ENCODE measurements at regions of chr20 and their contacts with region 1.

Region 1: DNA sequence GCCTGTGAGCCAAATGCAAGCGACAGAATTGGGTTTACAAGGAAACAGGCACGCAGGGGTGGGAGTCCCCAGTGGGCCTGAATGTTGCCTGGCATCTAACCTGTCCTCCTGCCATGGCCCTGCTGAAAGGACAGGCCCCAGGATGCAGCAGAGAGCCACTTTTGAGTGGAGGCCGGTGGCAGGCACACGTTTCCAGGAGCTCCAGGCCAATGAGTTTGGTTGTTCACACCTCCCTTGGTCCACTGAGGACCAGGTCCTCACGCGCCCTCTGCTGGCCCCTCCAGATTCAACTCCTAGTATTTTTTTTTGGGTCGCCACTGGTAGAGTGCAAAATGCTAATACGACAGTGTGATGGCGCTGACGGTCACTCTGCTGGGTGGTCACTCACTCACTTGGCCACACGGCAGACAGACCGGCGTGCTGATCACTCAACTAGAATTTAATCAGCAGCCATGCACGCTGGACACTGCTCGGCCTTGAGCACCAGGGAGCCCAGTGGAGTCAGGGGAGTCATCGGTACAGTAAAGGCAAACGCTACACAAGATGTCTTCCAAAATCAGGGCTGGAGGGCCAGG is 81.7 kb upstream of the NFATC2 start:
- DNase-seq: peak; percentile 70
- ATAC-seq: peak; percentile 67
- H3K4me3 Mint-ChIP-seq: no peak overlapping the region
- H3K27ac Mint-ChIP-seq: no peak overlapping the region
- H3K4me1 Mint-ChIP-seq: peaks cover 5% of the 10 kb centered on the region
- H3K27me3 Mint-ChIP-seq: no peaks in the 10 kb centered on the region

Region 2: DNA sequence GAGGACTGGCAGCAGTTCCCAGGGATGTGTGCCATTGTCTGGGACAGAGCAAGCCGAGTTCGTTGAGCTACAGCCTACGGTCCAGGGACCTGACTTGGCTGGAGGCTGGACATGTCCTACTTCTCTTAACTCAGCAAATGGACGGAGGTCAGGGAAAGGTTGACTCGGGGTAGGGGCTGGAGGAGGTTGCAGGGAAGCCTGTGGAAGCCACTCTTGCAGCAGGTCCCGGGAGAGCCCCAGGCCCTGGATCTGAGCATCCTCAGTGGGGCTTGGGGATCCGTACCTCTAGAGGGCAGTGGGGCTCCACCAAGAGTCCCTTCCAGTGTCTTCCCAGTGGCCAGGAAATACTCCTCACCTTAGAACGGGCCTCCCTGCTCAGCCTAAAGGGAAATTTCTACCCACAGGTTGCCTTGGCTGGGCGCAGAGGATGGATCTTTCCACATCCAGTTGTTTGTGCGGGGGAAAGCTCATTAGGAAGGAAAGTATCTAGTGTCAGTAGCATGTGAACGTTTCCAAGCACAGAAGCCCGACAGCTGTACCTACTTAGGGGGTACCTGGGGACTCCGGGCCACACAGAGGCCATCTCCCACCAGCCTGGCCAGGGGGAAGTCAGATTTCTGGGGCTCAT is 252.0 kb before region 1 on chr20:
- CTCF ChIA-PET with region 1: interaction called, 13 read pairs
- POLR2A ChIA-PET with region 1: no interaction called
- DNase-seq: peak; percentile 67
- ATAC-seq: peak; percentile 79
- H3K4me3 Mint-ChIP-seq: no peak overlapping the region
- H3K27ac Mint-ChIP-seq: no peak overlapping the region
- H3K4me1 Mint-ChIP-seq: peaks cover 29% of the 10 kb centered on the region
- H3K27me3 Mint-ChIP-seq: no peaks in the 10 kb centered on the region

Region 3: DNA sequence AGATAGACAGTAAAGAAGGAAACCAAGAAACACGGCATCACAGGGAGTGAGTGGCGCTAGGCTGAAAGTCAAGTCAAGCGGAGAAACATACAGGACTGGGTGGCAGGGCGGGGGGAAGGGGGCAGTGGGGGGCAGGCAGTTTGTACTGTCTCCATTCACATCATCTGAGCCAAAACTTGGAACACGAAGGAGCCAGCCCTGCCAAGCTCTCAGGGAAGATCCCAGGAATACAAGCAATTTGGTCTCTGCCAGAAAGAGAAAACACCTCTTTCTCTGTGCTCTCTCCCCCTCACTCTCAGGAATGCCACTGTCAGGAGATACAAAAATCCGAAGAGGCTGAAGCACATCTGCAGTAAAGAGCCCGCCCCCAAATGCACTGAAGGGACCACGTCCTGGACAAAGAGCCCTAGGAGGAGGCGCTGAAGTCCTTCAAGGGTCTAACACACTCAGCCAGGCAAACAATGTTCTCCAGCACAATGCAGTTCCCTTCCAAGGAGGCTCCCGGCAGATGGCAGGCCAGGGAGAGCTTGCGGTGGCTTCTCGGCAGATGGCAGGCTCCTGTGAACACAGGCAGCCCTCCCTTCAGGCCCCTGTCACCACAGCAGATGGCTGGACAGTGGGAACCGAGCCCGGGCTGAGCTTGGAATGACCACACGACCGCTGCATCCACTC is 53.9 kb after region 1 on chr20:
- CTCF ChIA-PET with region 1: no interaction called
- POLR2A ChIA-PET with region 1: no interaction called
- DNase-seq: no peak
- ATAC-seq: no peak
- H3K4me3 Mint-ChIP-seq: no peak overlapping the region
- H3K27ac Mint-ChIP-seq: no peak overlapping the region
- H3K4me1 Mint-ChIP-seq: no peaks in the 10 kb centered on the region
- H3K27me3 Mint-ChIP-seq: no peaks in the 10 kb centered on the region

Region 4: DNA sequence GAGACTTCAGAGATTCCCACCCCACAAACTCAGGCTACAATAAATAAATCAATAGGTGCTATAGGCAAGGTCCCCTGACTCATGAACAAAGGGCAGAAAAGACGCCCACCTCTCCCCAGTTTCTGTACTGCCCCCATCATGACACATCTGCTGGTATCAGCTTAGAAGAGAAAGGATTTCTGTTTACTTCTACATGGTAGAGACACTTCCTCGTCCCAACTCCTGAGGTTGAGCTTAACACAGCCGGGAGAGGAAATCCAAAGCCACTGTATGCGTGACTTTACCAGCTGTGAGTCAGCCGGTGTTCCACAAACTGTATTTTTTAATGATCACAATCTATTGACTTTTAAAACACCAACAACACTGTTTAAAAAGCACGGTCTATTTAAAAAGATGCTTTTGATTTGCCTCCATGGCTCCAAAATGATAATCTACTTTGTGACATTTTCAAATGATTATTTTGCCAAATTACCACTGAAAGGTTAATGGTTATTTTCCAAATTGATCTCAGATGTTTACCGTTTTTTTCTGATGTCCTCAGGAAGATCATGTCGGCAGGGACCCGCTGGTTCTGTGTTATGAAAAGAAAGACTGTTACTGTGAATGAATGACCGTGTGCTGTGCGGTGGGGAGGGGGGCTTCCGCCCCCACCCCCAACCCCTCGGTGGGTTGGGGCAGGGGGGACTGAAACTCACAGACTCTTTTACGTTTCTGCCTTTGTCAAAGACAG is 71.5 kb after region 1 on chr20:
- CTCF ChIA-PET with region 1: no interaction called
- POLR2A ChIA-PET with region 1: no interaction called
- DNase-seq: no peak
- ATAC-seq: no peak
- H3K4me3 Mint-ChIP-seq: no peak overlapping the region
- H3K27ac Mint-ChIP-seq: no peak overlapping the region
- H3K4me1 Mint-ChIP-seq: peaks cover 19% of the 10 kb centered on the region
- H3K27me3 Mint-ChIP-seq: peaks cover 17% of the 10 kb centered on the region

Measured in activated CD8-positive, alpha-beta T cell treated with anti-CD3 and anti-CD28 coated beads, Interleukin-2, amount 10 ng/mL, durations not matched to agents 7 days and 5 days (primary cell).